Motor neuron (in vitro differentiated cells): ENCODE measurements at regions of chr7 and their contacts with region 1.

Region 1: GRCh38 chr7:117862378-117862777 is 10.9 kb downstream of the CTTNBP2 start:
- ATAC-seq: no peak
- H3K4me3 ChIP-seq: no peak overlapping the region
- H3K27ac ChIP-seq: no peak overlapping the region
- H3K4me1 ChIP-seq: peaks cover 0 to 5% of the 10 kb centered on the region in 2 donors

Region 2: DNA sequence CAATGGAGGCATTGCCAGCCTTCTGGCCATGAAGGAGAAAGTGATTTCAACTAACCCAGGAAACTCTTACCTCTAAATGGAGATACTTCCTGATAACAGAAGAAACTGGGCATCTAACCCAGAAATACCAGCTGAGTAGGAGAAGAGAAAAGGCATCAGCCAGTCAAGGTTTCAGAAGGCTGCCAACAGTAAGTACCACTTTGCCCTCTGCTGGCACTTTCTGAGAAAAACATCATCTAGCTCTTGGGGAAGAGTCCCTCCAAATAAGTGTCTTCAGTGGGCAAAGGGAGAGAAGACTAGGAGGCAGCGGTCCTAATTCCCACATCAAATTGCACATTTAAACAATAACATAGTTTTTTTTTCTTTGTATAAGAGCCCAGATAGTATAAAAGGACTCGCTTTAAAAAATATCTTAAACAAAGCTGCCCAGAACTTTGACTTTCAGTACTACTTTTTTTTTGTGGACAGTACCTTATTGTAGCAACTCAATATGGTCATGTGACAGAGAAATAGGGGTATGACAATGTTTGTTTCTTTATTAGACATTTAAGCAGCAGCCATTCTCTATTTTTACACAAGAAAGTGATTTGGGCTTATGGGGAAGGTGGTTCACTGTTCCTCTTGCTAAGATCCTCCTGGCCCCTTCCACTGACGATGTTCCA is 146.5 kb before region 1 on chr7:
- in situ Hi-C with region 1: no loop called
- ATAC-seq: peak in 5 of 8 experiments; percentile 52 to 85 (median 77)
- H3K4me3 ChIP-seq: no peak overlapping the region
- H3K27ac ChIP-seq: no peak overlapping the region
- H3K4me1 ChIP-seq: no peaks in the 10 kb centered on the region

Region 3: GRCh38 chr7:117759950-117760640 is 102.3 kb before region 1 on chr7:
- in situ Hi-C with region 1: loop called in 1 of 9 experiments (anchors 10 kb)
- ATAC-seq: peak in 6 of 8 experiments; percentile 51 to 94 (median 80)
- H3K4me3 ChIP-seq: no peak overlapping the region
- H3K27ac ChIP-seq: no peak overlapping the region
- H3K4me1 ChIP-seq: no peaks in the 10 kb centered on the region

Region 4: DNA sequence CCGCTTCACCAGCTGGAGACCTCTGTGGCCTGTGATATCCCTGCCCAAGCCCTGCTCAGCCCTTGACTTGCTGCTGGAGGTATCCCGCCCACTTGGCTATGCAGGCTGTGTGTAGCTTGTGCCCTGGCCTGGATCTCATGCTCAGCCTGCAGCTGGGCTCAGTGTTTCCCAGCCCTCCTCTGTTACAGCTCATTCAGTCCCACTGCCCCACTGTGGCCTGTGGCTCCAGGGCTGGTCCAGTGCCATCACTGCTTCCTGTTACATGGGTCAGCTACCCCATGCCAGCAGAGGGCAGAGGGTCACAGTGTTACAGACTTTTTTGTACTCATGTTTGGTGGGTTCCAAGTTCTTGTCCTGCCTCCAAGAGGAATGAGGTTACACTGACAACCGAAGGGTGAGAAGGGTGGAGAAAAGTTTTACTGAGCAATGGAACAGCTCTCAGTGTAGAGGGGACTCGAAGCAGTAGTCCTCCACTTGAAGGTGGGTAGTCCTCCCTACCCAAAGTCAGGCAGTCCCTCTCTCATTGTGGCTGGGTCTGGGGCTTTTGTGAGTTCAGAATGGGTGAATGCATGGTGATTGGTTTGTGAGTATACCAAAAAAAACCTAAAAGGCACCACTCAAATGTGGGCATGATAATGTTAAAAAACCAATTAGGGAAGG is 462.5 kb after region 1 on chr7:
- in situ Hi-C with region 1: no loop called
- ATAC-seq: no peak
- H3K4me3 ChIP-seq: no peak overlapping the region
- H3K27ac ChIP-seq: no peak overlapping the region
- H3K4me1 ChIP-seq: peaks cover 0 to 4% of the 10 kb centered on the region in 2 donors